Psoas muscle (tissue), 8 donors: ENCODE measurements at regions of chr9 and their contacts with region 1.

Region 1: GRCh38 chr9:134333234-134333873 is 7.1 kb downstream of the RXRA start:
- DNase-seq: peak; percentile 50 to 62
- ATAC-seq: no peak
- H3K4me3 ChIP-seq: peak overlapping the region; percentile 1
- H3K27ac ChIP-seq: peak overlapping the region; percentile 97
- H3K4me1 ChIP-seq: peaks cover 87% of the 10 kb centered on the region
- H3K27me3 ChIP-seq: no peaks in the 10 kb centered on the region
- CTCF ChIP-seq: no peak

Region 2: DNA sequence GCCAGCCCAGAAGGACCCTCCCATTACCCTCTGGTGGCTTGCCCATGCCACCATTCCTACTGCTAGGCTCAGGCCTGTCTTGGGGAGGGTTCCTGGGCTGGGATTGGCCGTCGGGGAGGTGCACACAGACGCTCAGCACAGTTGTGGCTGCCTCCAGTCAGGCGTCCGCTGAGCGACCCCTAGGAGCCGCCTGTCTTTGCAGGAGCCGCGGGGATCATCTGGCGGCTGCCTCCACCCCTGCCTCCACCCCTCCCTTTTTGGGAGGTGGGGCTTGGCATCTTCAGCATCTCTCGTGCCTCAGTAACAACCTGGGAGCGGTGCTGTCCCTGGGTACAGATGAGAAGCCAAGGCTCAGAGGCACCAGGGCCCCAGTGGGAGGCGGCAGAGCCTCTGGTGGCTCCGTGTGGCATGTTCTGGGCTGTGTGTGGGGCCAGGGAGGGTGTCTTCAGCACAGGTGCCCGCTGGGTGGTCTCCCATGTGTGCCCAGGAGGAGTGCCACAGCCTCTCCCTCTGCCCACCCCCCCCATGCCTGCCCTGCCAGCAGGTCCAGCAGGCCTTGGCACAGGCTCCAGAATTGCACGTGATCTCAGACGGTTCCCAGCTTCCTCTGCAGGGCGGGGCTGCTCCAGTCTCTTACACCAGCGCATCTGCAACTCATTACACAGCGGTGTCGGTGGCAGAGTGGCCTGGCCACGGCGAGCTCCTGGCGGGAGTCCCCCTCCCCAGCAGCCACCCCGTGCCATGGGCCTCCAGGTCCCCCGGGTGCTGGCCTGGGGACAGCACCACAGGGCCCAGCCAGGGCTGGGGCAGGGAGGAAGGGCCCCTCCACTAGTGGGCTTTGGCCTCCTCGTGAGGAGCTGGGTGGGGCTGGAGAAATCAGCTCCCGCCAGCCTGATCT is 32.7 kb after region 1 on chr9:
- intact Hi-C with region 1: loop called in 1 of 2 experiments (anchors 5 kb)
- DNase-seq: peak; percentile 94 to 96
- ATAC-seq: peak; percentile 77 to 82 (median 78)
- H3K4me3 ChIP-seq: peak overlapping the region; percentile 49
- H3K27ac ChIP-seq: peak overlapping the region; percentile 91
- H3K4me1 ChIP-seq: peaks cover 83% of the 10 kb centered on the region
- H3K27me3 ChIP-seq: no peaks in the 10 kb centered on the region
- CTCF ChIP-seq: no peak

Region 3: GRCh38 chr9:134413890-134414731 is 80.8 kb after region 1 on chr9:
- intact Hi-C with region 1: loop called in 1 of 2 experiments (anchors 5 kb)
- DNase-seq: peak; percentile 79 to 94
- ATAC-seq: peak; percentile 63 to 78 (median 70)
- H3K4me3 ChIP-seq: peak overlapping the region; percentile 31
- H3K27ac ChIP-seq: peak overlapping the region; percentile 81
- H3K4me1 ChIP-seq: peaks cover 86% of the 10 kb centered on the region
- H3K27me3 ChIP-seq: no peaks in the 10 kb centered on the region
- CTCF ChIP-seq: no peak

Region 4: GRCh38 chr9:134525841-134526595 is 192.7 kb after region 1 on chr9:
- intact Hi-C with region 1: no loop called
- DNase-seq: peak; percentile 61 to 71
- ATAC-seq: peak in 3 of 4 donors; percentile 32 to 59 (median 49)
- H3K4me3 ChIP-seq: no peak overlapping the region
- H3K27ac ChIP-seq: peak overlapping the region; percentile 23
- H3K4me1 ChIP-seq: no peaks in the 10 kb centered on the region
- H3K27me3 ChIP-seq: peaks cover 0 to 25% (median 11%) of the 10 kb centered on the region in 3 donors
- CTCF ChIP-seq: no peak